ENCODE measurements at regions of chr17 and their contacts with region 1.

Region 1: GRCh38 chr17:75393523-75394331 is 11.8 kb downstream of the GRB2 start:
- DNase-seq: peak; percentile 95 to 98
- H3K4me3 ChIP-seq: peak overlapping the region; percentile 74 to 93 (median 82)
- H3K27ac ChIP-seq: peak overlapping the region; percentile 72
- H3K4me1 ChIP-seq: peaks cover 0 to 4% (median 0%) of the 10 kb centered on the region in 4 experiments; a peak in 1 of 7 replicates
- H3K27me3 ChIP-seq: no peaks in the 10 kb centered on the region
- CTCF ChIP-seq: no peak
- EP300 ChIP-seq: 0 out of 3 replicates have a peak, but pooled peaks of 1 of the 2 experiments have one; percentile 17
- POLR2A ChIP-seq: peak; percentile 61 to 87
- RAD21 ChIP-seq: peak in 1 of 2 experiments; percentile 6; a peak in 1 of 4 replicates

Region 2: GRCh38 chr17:75271233-75271954 is 122.3 kb before region 1 on chr17:
- CTCF ChIA-PET with region 1: interaction called, 11 read pairs
- POLR2A ChIA-PET with region 1: interaction called, 5 read pairs
- DNase-seq: peak in 1 of 2 experiments; percentile 88
- H3K4me3 ChIP-seq: peak overlapping the region; percentile 84 to 91 (median 87)
- H3K27ac ChIP-seq: 0 out of 2 replicates have a peak overlapping the region, but pooled peaks have one; percentile 11
- H3K4me1 ChIP-seq: peaks cover 0 to 9% (median 7%) of the 10 kb centered on the region in 4 experiments; a peak in 4 of 7 replicates
- H3K27me3 ChIP-seq: no peaks in the 10 kb centered on the region
- CTCF ChIP-seq: peak; percentile 80 to 87 (median 86)
- EP300 ChIP-seq: no peak
- POLR2A ChIP-seq: peak in 1 of 2 experiments; percentile 16; a peak in 1 of 3 replicates
- RAD21 ChIP-seq: peak in 1 of 2 experiments; percentile 44; a peak in 2 of 4 replicates

Region 3: GRCh38 chr17:75325827-75326225 is 67.9 kb before region 1 on chr17:
- CTCF ChIA-PET with region 1: interaction called, 97 read pairs
- POLR2A ChIA-PET with region 1: interaction called, 8 read pairs
- DNase-seq: no peak
- H3K4me3 ChIP-seq: no peak overlapping the region
- H3K27ac ChIP-seq: no peak overlapping the region
- H3K4me1 ChIP-seq: peaks cover 4 to 9% (median 7%) of the 10 kb centered on the region in 4 experiments; a peak in 5 of 7 replicates
- H3K27me3 ChIP-seq: no peaks in the 10 kb centered on the region
- CTCF ChIP-seq: no peak
- EP300 ChIP-seq: no peak
- POLR2A ChIP-seq: no peak
- RAD21 ChIP-seq: no peak

Region 4: GRCh38 chr17:75370286-75370915 is 23.3 kb before region 1 on chr17:
- CTCF ChIA-PET with region 1: interaction called, 4 read pairs
- POLR2A ChIA-PET with region 1: interaction called, 10 read pairs
- DNase-seq: no peak
- H3K4me3 ChIP-seq: no peak overlapping the region
- H3K27ac ChIP-seq: no peak overlapping the region
- H3K4me1 ChIP-seq: peaks cover 0 to 9% (median 3%) of the 10 kb centered on the region in 4 experiments; a peak in 4 of 7 replicates
- H3K27me3 ChIP-seq: no peaks in the 10 kb centered on the region
- CTCF ChIP-seq: no peak
- EP300 ChIP-seq: no peak
- POLR2A ChIP-seq: no peak
- RAD21 ChIP-seq: no peak

Region 5: GRCh38 chr17:75405365-75406221 is 11.9 kb after region 1 on chr17 and contains the start of gene GRB2:
- CTCF ChIA-PET with region 1: interaction called, 12 read pairs
- POLR2A ChIA-PET with region 1: interaction called, 9 read pairs
- DNase-seq: peak; percentile 84 to 100
- H3K4me3 ChIP-seq: peak within 1 kb of the TSS; percentile 90 to 94 (median 92)
- H3K27ac ChIP-seq: no peak within 1 kb of the TSS
- H3K4me1 ChIP-seq: no peaks in the 10 kb centered on the region
- H3K27me3 ChIP-seq: no peaks in the 10 kb centered on the region
- CTCF ChIP-seq: no peak
- EP300 ChIP-seq: no peak
- POLR2A ChIP-seq: peak in 1 of 2 experiments; percentile 73; a peak in 2 of 3 replicates
- RAD21 ChIP-seq: no peak
- total RNA-seq, gene GRB2: 101 and 102 TPM in 2 replicates